MCF 10A (cell line): ENCODE measurements at regions of chr4 and their contacts with region 1.

Region 1: DNA sequence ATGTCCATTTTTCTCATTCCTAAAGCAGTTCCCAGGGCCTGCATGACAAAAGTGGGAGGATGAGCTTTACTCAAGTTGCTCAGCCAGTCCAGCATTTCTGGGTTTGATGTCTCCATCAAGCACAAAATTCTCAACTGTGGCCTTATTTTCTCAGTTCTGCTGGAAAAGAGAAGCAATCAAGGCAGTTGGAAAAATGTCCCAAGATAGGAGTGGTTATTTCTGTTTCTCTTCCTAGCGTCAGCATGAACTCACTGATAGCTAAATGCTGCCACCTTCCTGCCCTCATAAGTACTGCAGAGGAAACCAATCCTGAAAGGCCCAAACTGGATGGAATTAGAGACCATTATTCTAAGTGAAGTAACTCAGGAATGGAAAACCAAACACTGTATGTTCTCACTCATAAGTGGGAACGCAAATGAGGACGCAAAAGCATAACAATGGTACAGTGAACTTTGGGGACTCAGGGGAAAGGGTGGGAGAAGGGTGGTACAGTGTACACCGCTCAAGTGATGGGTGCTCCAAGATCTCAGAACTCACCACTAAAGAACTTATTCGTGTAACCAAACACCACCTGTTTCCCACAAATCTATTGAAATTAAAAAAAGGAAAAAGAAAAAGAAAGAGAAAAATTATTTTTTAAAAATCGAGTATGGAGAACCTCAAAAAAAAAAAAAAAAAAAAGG is 29.6 kb downstream of the ADH7 start:
- DNase-seq: peak; percentile 84
- H3K4me3 Mint-ChIP-seq: no peak overlapping the region
- H3K27ac Mint-ChIP-seq: peak overlapping the region; percentile 76
- H3K4me1 Mint-ChIP-seq: peaks cover 16% of the 10 kb centered on the region
- H3K27me3 Mint-ChIP-seq: no peaks in the 10 kb centered on the region
- CTCF ChIP-seq: peak; percentile 96

Region 2: DNA sequence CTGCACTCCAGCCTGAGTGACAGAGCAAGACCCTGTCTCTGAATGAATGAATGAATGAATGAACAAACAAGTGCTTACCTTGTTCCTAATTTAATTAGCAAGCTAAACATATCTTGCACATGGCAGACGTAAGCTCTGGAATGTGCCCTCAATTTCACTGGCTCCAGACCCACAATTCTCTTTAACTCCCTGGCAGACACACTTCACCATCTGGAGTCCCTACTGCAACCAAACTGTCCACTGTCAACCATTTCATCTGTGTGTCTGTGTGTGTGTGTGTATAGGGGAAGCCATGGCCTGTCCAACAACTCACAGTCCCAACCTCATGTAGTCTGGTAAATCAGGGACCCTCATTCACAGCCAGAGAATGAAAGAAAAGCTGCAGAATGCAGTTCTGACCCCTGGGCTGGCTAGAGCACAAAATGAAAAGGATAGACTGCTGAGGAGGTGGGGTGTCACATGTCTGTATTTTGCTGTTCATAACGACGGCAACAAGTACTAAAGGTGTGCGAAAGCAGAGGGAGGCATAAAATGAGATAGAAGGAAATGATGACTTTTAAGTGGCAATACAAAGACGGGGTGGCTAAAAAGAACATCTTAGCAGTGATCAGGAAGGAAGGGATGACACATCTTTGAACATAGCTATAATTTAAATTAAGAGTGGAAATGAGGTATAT is 861.3 kb before region 1 on chr4:
- CTCF ChIA-PET with region 1: no interaction called
- POLR2A ChIA-PET with region 1: no interaction called
- intact Hi-C with region 1: no loop called
- DNase-seq: no peak
- H3K4me3 Mint-ChIP-seq: no peak overlapping the region
- H3K27ac Mint-ChIP-seq: no peak overlapping the region
- H3K4me1 Mint-ChIP-seq: peaks cover 6% of the 10 kb centered on the region
- H3K27me3 Mint-ChIP-seq: no peaks in the 10 kb centered on the region
- CTCF ChIP-seq: no peak

Region 3: GRCh38 chr4:99117876-99118693 is 287.5 kb before region 1 on chr4:
- CTCF ChIA-PET with region 1: interaction called, 27 read pairs
- POLR2A ChIA-PET with region 1: no interaction called
- intact Hi-C with region 1: loop called (anchors 1 kb)
- DNase-seq: peak; percentile 30
- H3K4me3 Mint-ChIP-seq: no peak overlapping the region
- H3K27ac Mint-ChIP-seq: no peak overlapping the region
- H3K4me1 Mint-ChIP-seq: no peaks in the 10 kb centered on the region
- H3K27me3 Mint-ChIP-seq: no peaks in the 10 kb centered on the region
- CTCF ChIP-seq: peak; percentile 25

Region 4: GRCh38 chr4:99159699-99160098 is 245.9 kb before region 1 on chr4:
- CTCF ChIA-PET with region 1: interaction called, 18 read pairs
- POLR2A ChIA-PET with region 1: no interaction called
- intact Hi-C with region 1: loop called (anchors 1 kb)
- DNase-seq: peak; percentile 14
- H3K4me3 Mint-ChIP-seq: no peak overlapping the region
- H3K27ac Mint-ChIP-seq: no peak overlapping the region
- H3K4me1 Mint-ChIP-seq: no peaks in the 10 kb centered on the region
- H3K27me3 Mint-ChIP-seq: no peaks in the 10 kb centered on the region
- CTCF ChIP-seq: peak; percentile 17

Region 5: DNA sequence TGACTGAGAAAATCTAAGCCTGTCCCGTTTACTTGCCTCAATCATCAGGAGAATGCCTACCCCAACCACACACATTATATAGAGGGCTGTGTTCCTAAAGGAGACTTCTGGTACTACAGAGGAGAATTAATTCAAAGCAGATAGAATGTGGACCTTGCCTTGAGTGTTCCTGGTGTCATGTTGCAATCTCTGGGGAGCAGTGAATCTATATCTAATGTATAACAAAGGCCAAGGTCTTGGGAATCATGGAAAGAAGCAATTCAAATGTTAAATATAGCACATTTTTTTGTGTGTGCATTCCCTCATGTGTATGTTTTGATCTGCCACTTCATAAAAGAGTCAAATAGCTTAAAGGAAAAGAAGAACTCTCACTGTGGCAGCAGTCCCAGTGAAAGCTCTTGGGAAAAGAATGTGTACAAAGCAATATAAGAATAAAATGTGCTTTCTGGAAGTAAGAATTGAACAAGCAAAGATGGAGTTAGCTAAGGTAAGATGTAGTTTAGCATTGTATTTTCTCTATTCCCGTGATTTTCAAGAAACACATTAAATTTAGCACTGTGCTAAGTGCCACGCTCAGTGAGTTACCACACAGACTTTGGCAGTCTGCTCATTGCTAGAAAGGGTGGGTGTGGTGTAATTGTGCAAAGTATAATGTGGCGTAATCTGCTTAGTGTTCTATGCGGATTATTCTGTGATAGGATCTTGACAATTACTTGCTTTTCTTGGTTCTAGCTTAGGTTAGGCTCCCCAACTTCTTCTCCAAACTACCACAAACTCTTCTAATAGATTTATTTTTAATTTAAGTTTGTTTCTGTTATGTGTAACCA is 200.2 kb before region 1 on chr4:
- CTCF ChIA-PET with region 1: interaction called, 75 read pairs
- POLR2A ChIA-PET with region 1: interaction called, 23 read pairs
- intact Hi-C with region 1: loop called (anchors 1 kb)
- DNase-seq: peak; percentile 83
- H3K4me3 Mint-ChIP-seq: no peak overlapping the region
- H3K27ac Mint-ChIP-seq: peak overlapping the region; percentile 43
- H3K4me1 Mint-ChIP-seq: peaks cover 25% of the 10 kb centered on the region
- H3K27me3 Mint-ChIP-seq: no peaks in the 10 kb centered on the region
- CTCF ChIP-seq: no peak

Region 6: GRCh38 chr4:99383833-99384392 is 21.7 kb before region 1 on chr4:
- CTCF ChIA-PET with region 1: interaction called, 11 read pairs
- POLR2A ChIA-PET with region 1: interaction called, 5 read pairs
- intact Hi-C with region 1: no loop called
- DNase-seq: peak; percentile 8
- H3K4me3 Mint-ChIP-seq: no peak overlapping the region
- H3K27ac Mint-ChIP-seq: no peak overlapping the region
- H3K4me1 Mint-ChIP-seq: peaks cover 6% of the 10 kb centered on the region
- H3K27me3 Mint-ChIP-seq: no peaks in the 10 kb centered on the region
- CTCF ChIP-seq: no peak

Region 7: DNA sequence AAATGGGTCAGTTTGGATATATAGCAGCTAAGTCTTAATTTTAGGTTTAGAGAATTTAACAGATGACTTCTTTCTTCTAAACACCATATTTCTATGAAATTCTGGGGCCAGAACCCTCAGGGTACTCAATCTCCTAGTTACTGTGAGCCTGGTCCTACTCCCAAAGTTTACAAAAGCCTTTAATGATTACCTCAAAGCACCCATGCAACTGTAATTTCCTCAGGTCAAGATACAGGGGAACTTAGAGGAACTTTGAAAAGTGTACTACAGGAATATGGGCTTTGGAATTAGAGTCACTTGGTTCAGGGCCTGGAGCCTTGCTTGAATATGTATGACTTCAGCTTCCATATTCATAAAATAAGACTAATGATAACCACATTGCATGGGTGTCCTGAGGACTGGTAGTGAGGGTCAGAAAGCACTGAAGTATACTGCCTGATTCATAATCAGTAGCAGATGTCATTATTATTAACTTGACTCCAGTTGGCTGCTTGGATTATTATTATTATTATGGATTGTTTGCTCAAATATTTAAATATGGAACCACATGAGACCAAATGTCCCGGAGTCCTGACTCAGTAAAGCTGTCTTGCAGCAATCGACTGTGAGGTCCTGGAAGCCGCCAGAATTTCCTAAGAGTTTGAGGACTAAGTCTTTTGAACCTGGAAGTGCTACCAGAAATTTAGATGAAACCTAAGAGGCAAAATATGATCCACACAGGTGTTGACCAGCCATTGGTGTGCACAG is 31.6 kb after region 1 on chr4:
- CTCF ChIA-PET with region 1: no interaction called
- POLR2A ChIA-PET with region 1: no interaction called
- intact Hi-C with region 1: no loop called
- DNase-seq: no peak
- H3K4me3 Mint-ChIP-seq: no peak overlapping the region
- H3K27ac Mint-ChIP-seq: no peak overlapping the region
- H3K4me1 Mint-ChIP-seq: no peaks in the 10 kb centered on the region
- H3K27me3 Mint-ChIP-seq: no peaks in the 10 kb centered on the region
- CTCF ChIP-seq: no peak